Naive thymus-derived CD4-positive, alpha-beta T cell (primary cell): ENCODE measurements at regions of chr11 and their contacts with region 1.

Region 1: GRCh38 chr11:108697872-108698473 is 33.1 kb downstream of the DDX10 start:
- DNase-seq: peak in 6 of 9 donors; percentile 7 to 37 (median 24)
- ATAC-seq: peak; percentile 79
- H3K4me3 ChIP-seq: no peak overlapping the region
- H3K4me3 Mint-ChIP-seq: no peak overlapping the region
- H3K27ac ChIP-seq: no peak overlapping the region
- H3K27ac Mint-ChIP-seq: no peak overlapping the region
- H3K4me1 ChIP-seq: no peaks in the 10 kb centered on the region
- H3K4me1 Mint-ChIP-seq: no peaks in the 10 kb centered on the region
- H3K27me3 ChIP-seq: no peaks in the 10 kb centered on the region
- H3K27me3 Mint-ChIP-seq: no peaks in the 10 kb centered on the region

Region 2: DNA sequence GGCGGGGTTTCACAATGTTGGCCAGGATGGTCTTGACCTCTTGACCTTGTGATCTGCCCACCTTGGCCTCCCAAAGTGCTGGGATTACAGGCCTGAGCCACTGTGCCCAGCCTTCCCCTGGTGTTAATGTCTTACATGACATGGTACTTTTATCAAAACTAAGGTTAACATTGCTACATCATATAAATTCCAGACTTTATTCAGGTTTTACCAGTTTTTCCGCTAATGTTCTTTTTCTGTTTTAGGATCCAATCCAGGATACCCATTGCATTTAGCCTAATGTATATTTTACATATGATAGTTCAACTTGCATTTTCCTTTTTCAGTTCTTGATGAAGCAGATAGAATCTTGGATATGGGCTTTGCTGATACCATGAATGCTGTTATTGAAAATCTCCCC is 18.9 kb before region 1 on chr11:
- CTCF ChIA-PET with region 1: no interaction called
- POLR2A ChIA-PET with region 1: no interaction called
- intact Hi-C with region 1: loop called in 1 of 2 experiments (anchors 2 kb)
- DNase-seq: no peak
- ATAC-seq: no peak
- H3K4me3 ChIP-seq: no peak overlapping the region
- H3K4me3 Mint-ChIP-seq: no peak overlapping the region
- H3K27ac ChIP-seq: no peak overlapping the region
- H3K27ac Mint-ChIP-seq: no peak overlapping the region
- H3K4me1 ChIP-seq: no peaks in the 10 kb centered on the region
- H3K4me1 Mint-ChIP-seq: peaks cover 1 to 24% (median 13%) of the 10 kb centered on the region in 7 donors
- H3K27me3 ChIP-seq: no peaks in the 10 kb centered on the region
- H3K27me3 Mint-ChIP-seq: no peaks in the 10 kb centered on the region

Region 3: DNA sequence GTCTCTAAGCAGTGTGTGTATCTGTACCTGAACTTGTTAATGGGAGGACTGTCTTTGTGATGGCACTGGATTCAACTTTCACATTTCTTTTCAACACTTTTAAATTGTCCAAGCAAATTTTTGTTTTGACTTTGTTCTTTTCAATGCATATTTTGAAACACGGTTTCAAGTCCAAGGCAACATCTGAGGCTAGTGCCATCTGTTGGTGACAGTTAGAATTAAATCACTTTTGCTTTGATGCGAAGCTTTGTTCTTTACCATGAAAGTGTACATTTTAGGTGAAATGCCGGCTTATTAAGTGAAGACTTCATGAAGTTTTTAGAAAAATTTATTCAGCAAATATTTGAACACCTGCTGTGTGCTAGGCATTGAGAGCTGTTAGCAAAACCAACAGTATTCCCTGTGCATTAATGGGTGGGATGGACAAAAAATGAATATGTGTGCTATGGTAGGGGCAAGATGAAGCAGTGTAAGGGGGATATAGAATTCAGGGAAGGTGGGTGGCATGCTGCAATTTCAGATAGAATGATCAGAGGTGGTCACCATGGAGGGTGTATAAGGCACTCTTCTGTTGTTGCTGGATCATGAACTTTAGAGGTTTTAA is 37.1 kb after region 1 on chr11:
- CTCF ChIA-PET with region 1: no interaction called
- POLR2A ChIA-PET with region 1: no interaction called
- intact Hi-C with region 1: loop called in 1 of 2 experiments (anchors 1 kb)
- DNase-seq: peak in 5 of 9 donors; percentile 6 to 20 (median 10)
- ATAC-seq: peak; percentile 44
- H3K4me3 ChIP-seq: no peak overlapping the region
- H3K4me3 Mint-ChIP-seq: peak overlapping the region in 1 of 10 donors; percentile 7
- H3K27ac ChIP-seq: no peak overlapping the region
- H3K27ac Mint-ChIP-seq: no peak overlapping the region
- H3K4me1 ChIP-seq: peaks cover 0 to 5% of the 10 kb centered on the region in 2 donors
- H3K4me1 Mint-ChIP-seq: peaks cover 16 to 41% (median 36%) of the 10 kb centered on the region in 7 donors
- H3K27me3 ChIP-seq: no peaks in the 10 kb centered on the region
- H3K27me3 Mint-ChIP-seq: no peaks in the 10 kb centered on the region

Region 4: GRCh38 chr11:108871152-108871551 is 173.2 kb after region 1 on chr11:
- CTCF ChIA-PET with region 1: interaction called, 4 read pairs
- POLR2A ChIA-PET with region 1: no interaction called
- intact Hi-C with region 1: loop called (anchors 1 to 2 kb)
- DNase-seq: peak in 3 of 9 donors; percentile 10 to 22 (median 14)
- ATAC-seq: no peak
- H3K4me3 ChIP-seq: no peak overlapping the region
- H3K4me3 Mint-ChIP-seq: no peak overlapping the region
- H3K27ac ChIP-seq: no peak overlapping the region
- H3K27ac Mint-ChIP-seq: no peak overlapping the region
- H3K4me1 ChIP-seq: no peaks in the 10 kb centered on the region
- H3K4me1 Mint-ChIP-seq: peaks cover 0 to 21% (median 7%) of the 10 kb centered on the region in 7 donors
- H3K27me3 ChIP-seq: no peaks in the 10 kb centered on the region
- H3K27me3 Mint-ChIP-seq: no peaks in the 10 kb centered on the region

Region 5: DNA sequence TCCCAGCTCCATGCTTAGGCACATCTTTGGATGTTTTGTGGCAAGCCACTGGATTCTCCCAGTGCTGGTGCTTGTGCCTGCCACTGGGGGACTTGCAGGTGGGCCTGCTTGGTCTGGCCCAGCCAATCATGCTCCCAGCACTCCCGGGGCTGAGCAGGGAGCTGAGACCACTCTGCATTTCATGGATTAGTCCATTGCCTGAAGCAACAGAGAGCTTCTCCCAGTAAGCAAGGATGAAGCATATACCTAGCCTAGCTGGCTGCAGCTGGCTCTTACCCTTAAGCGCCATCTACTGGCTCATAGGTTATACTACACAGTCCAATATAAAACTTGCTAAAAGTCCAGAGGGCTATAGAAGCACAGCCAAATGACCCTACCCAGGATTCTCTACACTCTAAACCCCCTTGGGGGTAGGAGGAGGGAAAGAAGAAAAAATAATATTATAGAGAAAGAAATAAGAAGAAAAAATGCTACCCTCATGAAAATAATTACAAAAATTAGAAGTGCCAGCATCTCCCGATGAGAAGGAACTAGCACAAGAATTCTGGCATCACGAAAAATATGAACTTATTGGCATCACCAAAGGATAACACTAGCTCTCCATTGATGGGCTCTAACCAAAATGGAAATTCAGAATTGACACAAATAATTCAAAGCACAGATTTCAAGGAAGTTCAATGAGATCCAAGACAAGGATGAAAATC is 999.3 kb after region 1 on chr11:
- CTCF ChIA-PET with region 1: no interaction called
- POLR2A ChIA-PET with region 1: no interaction called
- intact Hi-C with region 1: loop called in 1 of 2 experiments (anchors 1 kb)
- DNase-seq: no peak
- ATAC-seq: peak; percentile 66
- H3K4me3 ChIP-seq: no peak overlapping the region
- H3K4me3 Mint-ChIP-seq: no peak overlapping the region
- H3K27ac ChIP-seq: no peak overlapping the region
- H3K27ac Mint-ChIP-seq: no peak overlapping the region
- H3K4me1 ChIP-seq: no peaks in the 10 kb centered on the region
- H3K4me1 Mint-ChIP-seq: no peaks in the 10 kb centered on the region
- H3K27me3 ChIP-seq: no peaks in the 10 kb centered on the region
- H3K27me3 Mint-ChIP-seq: no peaks in the 10 kb centered on the region

Region 6: DNA sequence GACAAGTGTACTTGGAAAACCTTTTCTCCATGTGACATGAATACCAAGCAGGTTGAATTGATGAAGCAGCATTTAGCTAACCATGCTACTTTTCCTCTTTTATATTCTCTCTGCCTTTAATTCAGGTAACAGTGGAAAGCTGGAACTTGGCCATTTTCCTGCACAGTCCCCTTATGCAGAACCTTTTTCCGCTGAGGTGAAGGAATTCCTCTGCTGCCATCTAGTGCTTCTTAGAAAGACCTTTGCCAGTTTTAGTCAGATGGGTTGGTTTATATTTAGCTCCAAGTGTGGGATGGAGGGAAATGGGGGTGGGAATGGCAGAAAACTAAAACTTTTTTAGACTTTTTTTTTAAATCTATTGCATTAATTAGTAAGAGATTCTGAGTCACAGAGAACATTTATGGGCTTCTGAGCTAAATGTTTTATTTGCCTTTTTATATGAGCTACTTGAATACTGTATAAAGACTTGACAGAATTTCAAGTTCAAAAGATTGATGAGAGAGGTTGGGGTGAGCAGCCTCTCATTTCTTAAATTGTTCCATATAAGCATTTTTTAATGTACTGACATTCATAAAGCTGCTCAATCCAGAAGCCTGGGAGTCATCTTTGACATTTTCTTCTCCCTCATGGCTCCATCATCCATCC is 1241.3 kb after region 1 on chr11:
- CTCF ChIA-PET with region 1: no interaction called
- POLR2A ChIA-PET with region 1: no interaction called
- intact Hi-C with region 1: loop called in 1 of 2 experiments (anchors 10 kb)
- DNase-seq: no peak
- ATAC-seq: no peak
- H3K4me3 ChIP-seq: no peak overlapping the region
- H3K4me3 Mint-ChIP-seq: no peak overlapping the region
- H3K27ac ChIP-seq: no peak overlapping the region
- H3K27ac Mint-ChIP-seq: no peak overlapping the region
- H3K4me1 ChIP-seq: no peaks in the 10 kb centered on the region
- H3K4me1 Mint-ChIP-seq: no peaks in the 10 kb centered on the region
- H3K27me3 ChIP-seq: no peaks in the 10 kb centered on the region
- H3K27me3 Mint-ChIP-seq: peaks cover 4 to 28% (median 20%) of the 10 kb centered on the region in 5 donors

Region 7: DNA sequence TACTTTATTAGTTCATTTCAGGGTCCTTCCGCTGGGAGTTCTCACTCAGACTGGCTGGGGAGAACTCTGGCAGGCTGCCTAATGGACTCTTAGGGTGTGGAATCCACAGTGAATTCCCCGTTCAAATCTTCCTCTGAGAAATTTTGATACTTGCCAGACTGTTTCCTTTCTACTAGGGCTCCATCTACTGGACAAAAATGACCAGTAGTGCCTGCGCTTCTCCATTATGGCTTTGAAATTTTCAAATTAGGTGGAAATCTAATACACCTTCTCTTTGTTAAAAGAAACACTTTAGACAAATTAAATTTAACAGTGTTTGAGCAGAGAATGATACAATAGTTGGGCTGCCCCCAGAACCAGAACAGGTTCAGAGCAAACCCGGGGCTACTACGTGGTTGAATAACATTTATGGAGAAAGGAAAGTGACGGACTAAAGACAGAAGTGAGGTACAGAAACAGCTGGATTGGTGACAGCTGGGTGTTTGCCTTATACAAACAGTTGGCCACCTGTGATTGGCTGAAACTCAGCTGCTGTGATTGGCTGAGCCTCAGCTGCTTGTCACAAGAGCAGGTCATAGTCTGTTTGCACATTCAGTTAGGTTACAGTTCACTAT is 1678.8 kb after region 1 on chr11:
- CTCF ChIA-PET with region 1: no interaction called
- POLR2A ChIA-PET with region 1: no interaction called
- intact Hi-C with region 1: loop called in 1 of 2 experiments (anchors 2 kb)
- DNase-seq: peak in 7 of 9 donors; percentile 13 to 45 (median 22)
- ATAC-seq: peak; percentile 68
- H3K4me3 ChIP-seq: no peak overlapping the region
- H3K4me3 Mint-ChIP-seq: no peak overlapping the region
- H3K27ac ChIP-seq: no peak overlapping the region
- H3K27ac Mint-ChIP-seq: no peak overlapping the region
- H3K4me1 ChIP-seq: no peaks in the 10 kb centered on the region
- H3K4me1 Mint-ChIP-seq: peaks cover 0 to 27% (median 5%) of the 10 kb centered on the region in 7 donors
- H3K27me3 ChIP-seq: no peaks in the 10 kb centered on the region
- H3K27me3 Mint-ChIP-seq: peaks cover 0 to 6% (median 4%) of the 10 kb centered on the region in 5 donors